Gastrocnemius medialis (tissue), 4 donors: ENCODE measurements at regions of chr2 and their contacts with region 1.

Region 1: GRCh38 chr2:112584134-112584890 is at the start of gene CHCHD5:
- DNase-seq: peak; percentile 93 to 95
- ATAC-seq: peak; percentile 84
- H3K4me3 ChIP-seq: peak within 1 kb of the TSS; percentile 70 to 86 (median 76)
- H3K27ac ChIP-seq: peak within 1 kb of the TSS; percentile 93 to 99 (median 96)
- H3K4me1 ChIP-seq: peaks cover 39 to 40% of the 10 kb centered on the region in 2 donors
- H3K27me3 ChIP-seq: no peaks in the 10 kb centered on the region
- CTCF ChIP-seq: peak in 3 of 5 experiments; percentile 6 to 24 (median 21)
- POLR2A ChIP-seq: peak; percentile 72 to 78
- total RNA-seq, gene CHCHD5: 13.2 to 26.6 (median 24.1) TPM

Region 2: GRCh38 chr2:111624401-111625156 is 959.7 kb before region 1 on chr2:
- in situ Hi-C with region 1: no loop called
- intact Hi-C with region 1: loop called (anchors 5 kb)
- DNase-seq: no peak
- ATAC-seq: peak; percentile 95 to 99
- H3K4me3 ChIP-seq: no peak overlapping the region
- H3K27ac ChIP-seq: peak overlapping the region; percentile 42 to 78 (median 56)
- H3K4me1 ChIP-seq: peaks cover 22 to 42% of the 10 kb centered on the region in 2 donors
- H3K27me3 ChIP-seq: no peaks in the 10 kb centered on the region
- CTCF ChIP-seq: no peak
- POLR2A ChIP-seq: no peak

Region 3: DNA sequence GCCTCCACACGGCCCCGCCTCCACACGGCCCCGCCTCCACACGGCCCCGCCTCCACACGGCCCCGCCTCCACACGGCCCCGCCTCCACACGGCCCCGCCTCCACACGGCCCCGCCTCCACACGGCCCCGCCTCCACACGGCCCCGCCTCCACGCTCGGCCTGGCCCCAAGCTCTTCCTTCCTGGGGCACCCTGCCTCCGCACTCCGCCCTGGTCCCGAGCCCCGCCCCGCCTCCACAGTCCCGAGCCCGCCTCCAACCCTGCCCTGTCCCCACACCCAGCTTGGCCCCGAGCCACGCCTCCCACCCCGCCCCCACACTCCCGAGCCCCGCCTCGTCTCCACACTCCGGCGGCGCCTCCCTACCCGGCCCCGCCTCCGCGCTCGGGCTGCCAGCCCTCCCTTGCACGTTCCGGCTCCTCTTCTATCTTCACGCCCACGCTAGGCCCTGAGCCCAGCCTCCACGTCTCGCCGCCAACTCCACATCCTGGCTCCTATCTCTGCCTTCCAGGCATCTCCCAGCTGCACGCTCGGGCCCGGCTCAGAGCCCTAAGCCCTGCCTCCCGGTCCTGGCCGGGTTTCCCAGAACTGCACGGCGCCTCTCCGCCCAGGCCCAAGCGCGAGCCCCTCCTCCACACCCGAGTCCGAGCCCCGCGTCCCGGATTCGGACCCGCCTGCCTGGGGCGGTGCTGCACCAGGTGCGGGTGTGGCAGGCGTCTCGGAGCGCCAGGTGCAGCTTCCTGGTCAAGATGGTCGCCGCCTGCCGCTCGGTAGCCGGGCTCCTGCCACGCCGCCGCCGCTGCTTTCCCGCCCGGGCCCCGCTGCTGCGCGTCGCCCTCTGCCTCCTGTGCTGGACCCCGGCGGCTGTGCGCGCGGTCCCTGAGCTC is 529.2 kb before region 1 on chr2 and contains the start of gene TMEM87B:
- in situ Hi-C with region 1: no loop called
- intact Hi-C with region 1: loop called (anchors 2 kb)
- DNase-seq: peak; percentile 96 to 97
- ATAC-seq: peak; percentile 77 to 78
- H3K4me3 ChIP-seq: peak within 1 kb of the TSS; percentile 70 to 95 (median 84)
- H3K27ac ChIP-seq: peak within 1 kb of the TSS; percentile 87 to 96 (median 94)
- H3K4me1 ChIP-seq: peaks cover 13 to 18% of the 10 kb centered on the region in 2 donors
- H3K27me3 ChIP-seq: no peaks in the 10 kb centered on the region
- CTCF ChIP-seq: no peak
- POLR2A ChIP-seq: peak; percentile 36 to 58
- total RNA-seq, gene TMEM87B: 2.6 to 5.0 (median 3.1) TPM

Region 4: DNA sequence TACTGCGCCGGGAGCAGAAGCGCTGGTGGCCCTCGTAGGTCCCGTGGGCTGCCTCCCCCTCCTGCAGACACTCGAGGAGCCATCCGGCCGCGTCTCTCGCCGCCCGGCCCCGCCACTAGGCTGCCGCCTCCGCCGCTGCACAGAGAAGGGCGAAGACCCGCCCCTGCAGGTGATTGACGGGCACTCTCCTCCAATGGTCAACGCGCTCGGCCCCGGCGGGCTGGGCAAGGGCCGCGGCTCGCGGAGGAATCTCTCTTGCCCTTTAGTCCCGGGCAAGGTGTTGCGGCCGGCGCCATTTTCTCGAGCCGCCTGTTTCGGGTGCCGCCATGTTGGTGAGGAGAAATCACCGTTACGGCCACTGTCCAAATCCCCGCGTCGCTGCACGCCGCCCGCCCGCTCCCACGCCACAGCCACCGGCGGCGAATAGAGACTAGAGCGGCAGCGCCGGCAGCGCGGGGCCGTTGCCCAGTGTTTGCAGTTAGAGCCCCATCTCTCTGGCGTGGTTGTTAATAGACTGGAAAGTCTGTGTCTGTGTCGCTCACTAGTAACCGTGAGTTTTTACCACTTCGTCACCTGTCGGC is 308.9 kb before region 1 on chr2 and contains the start of gene ZC3H6:
- in situ Hi-C with region 1: loop called in 1 of 4 experiments (anchors 25 kb)
- intact Hi-C with region 1: loop called (anchors 1 kb)
- DNase-seq: peak; percentile 98 to 99
- ATAC-seq: peak; percentile 93 to 94
- H3K4me3 ChIP-seq: peak within 1 kb of the TSS; percentile 88 to 97 (median 94)
- H3K27ac ChIP-seq: peak within 1 kb of the TSS; percentile 99 to 100 (median 100)
- H3K4me1 ChIP-seq: peaks cover 22 to 26% of the 10 kb centered on the region in 2 donors
- H3K27me3 ChIP-seq: no peaks in the 10 kb centered on the region
- CTCF ChIP-seq: peak in 4 of 5 experiments; percentile 32 to 49 (median 43)
- POLR2A ChIP-seq: peak; percentile 86 to 91
- total RNA-seq, gene ZC3H6: 6.3 to 15.1 (median 9.9) TPM

Region 5: GRCh38 chr2:112481050-112481527 is 103.2 kb before region 1 on chr2:
- in situ Hi-C with region 1: loop called in 3 of 4 experiments (anchors 5 to 10 kb)
- intact Hi-C with region 1: loop called (anchors 1 kb)
- DNase-seq: peak; percentile 75
- ATAC-seq: peak; percentile 80 to 81
- H3K4me3 ChIP-seq: peak overlapping the region; percentile 70 to 99 (median 90)
- H3K27ac ChIP-seq: peak overlapping the region; percentile 89 to 94 (median 91)
- H3K4me1 ChIP-seq: peaks cover 16 to 18% of the 10 kb centered on the region in 2 donors
- H3K27me3 ChIP-seq: no peaks in the 10 kb centered on the region
- CTCF ChIP-seq: peak; percentile 58 to 89 (median 74)
- POLR2A ChIP-seq: no peak

Region 6: GRCh38 chr2:112542123-112542983 is 42.0 kb before region 1 on chr2 and contains the start of gene POLR1B:
- in situ Hi-C with region 1: no loop called
- intact Hi-C with region 1: loop called (anchors 2 kb)
- DNase-seq: peak; percentile 79 to 85
- ATAC-seq: peak; percentile 95 to 97
- H3K4me3 ChIP-seq: peak within 1 kb of the TSS; percentile 74 to 99 (median 90)
- H3K27ac ChIP-seq: peak within 1 kb of the TSS; percentile 75 to 90 (median 88)
- H3K4me1 ChIP-seq: peaks cover 20 to 25% of the 10 kb centered on the region in 2 donors
- H3K27me3 ChIP-seq: no peaks in the 10 kb centered on the region
- CTCF ChIP-seq: no peak
- POLR2A ChIP-seq: no peak
- total RNA-seq, gene POLR1B: 13.0 to 18.1 (median 13.3) TPM

Region 7: GRCh38 chr2:112645310-112646101 is 61.2 kb after region 1 on chr2 and contains the start of gene SLC20A1:
- in situ Hi-C with region 1: no loop called
- intact Hi-C with region 1: loop called (anchors 1 kb)
- DNase-seq: peak; percentile 93 to 94
- ATAC-seq: peak; percentile 87 to 88
- H3K4me3 ChIP-seq: peak within 1 kb of the TSS; percentile 76 to 91 (median 81)
- H3K27ac ChIP-seq: peak within 1 kb of the TSS; percentile 95 to 99 (median 96)
- H3K4me1 ChIP-seq: peaks cover 22 to 26% of the 10 kb centered on the region in 2 donors
- H3K27me3 ChIP-seq: no peaks in the 10 kb centered on the region
- CTCF ChIP-seq: peak in 4 of 5 experiments; percentile 16 to 56 (median 46)
- POLR2A ChIP-seq: peak; percentile 99 to 100
- total RNA-seq, gene SLC20A1: 6.9 to 85.7 (median 9.2) TPM